HAP-1 (cell line): ENCODE measurements at regions of chr17 and their contacts with region 1.

Region 1: DNA sequence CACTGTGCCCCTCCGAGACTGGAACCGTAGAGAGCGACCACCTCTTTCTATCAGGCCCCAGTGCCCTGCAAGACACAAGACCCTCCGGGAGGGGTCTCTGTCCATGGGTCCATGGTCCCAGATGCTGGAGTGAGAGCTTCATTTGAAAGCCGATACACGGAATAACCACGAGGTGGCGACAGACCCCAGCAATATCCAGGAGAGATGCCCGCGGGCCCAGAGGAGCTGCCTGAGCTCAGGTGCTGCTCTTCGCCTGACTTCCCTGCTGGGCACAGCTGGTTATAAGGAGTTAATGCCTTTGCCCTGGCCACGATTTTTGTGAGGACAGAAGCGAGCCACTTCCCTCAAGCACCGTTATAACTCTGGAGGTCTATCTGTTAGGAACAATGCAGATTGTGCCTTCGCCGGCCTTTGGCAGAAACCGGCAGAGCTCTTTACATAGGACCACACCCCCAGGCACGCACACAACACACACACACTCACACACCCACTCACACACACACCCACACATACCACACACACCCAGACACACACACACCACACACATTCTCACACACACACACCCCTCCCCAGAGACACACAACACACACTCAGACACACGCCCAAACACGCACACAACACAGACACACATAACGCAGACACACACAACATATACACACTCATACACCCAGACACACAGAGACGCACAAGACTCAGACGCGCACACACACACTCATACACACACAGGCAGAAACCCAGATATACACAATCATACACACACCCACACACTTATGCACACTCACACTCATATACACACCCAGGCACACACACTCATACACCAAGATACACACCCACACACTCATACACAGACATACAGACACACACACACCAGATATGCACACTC is 436.4 kb downstream of the SOX9 start:
- DNase-seq: peak; percentile 36 to 82
- H3K4me3 ChIP-seq: no peak overlapping the region
- H3K4me1 ChIP-seq: no peaks in the 10 kb centered on the region
- H3K27me3 ChIP-seq: no peaks in the 10 kb centered on the region

Region 2: GRCh38 chr17:72631949-72632684 is 74.9 kb after region 1 on chr17:
- in situ Hi-C with region 1: no loop called
- DNase-seq: no peak
- H3K4me3 ChIP-seq: no peak overlapping the region
- H3K4me1 ChIP-seq: no peaks in the 10 kb centered on the region
- H3K27me3 ChIP-seq: no peaks in the 10 kb centered on the region

Region 3: GRCh38 chr17:72804949-72805707 is 247.9 kb after region 1 on chr17:
- in situ Hi-C with region 1: no loop called
- DNase-seq: no peak
- H3K4me3 ChIP-seq: no peak overlapping the region
- H3K4me1 ChIP-seq: no peaks in the 10 kb centered on the region
- H3K27me3 ChIP-seq: no peaks in the 10 kb centered on the region

Region 4: DNA sequence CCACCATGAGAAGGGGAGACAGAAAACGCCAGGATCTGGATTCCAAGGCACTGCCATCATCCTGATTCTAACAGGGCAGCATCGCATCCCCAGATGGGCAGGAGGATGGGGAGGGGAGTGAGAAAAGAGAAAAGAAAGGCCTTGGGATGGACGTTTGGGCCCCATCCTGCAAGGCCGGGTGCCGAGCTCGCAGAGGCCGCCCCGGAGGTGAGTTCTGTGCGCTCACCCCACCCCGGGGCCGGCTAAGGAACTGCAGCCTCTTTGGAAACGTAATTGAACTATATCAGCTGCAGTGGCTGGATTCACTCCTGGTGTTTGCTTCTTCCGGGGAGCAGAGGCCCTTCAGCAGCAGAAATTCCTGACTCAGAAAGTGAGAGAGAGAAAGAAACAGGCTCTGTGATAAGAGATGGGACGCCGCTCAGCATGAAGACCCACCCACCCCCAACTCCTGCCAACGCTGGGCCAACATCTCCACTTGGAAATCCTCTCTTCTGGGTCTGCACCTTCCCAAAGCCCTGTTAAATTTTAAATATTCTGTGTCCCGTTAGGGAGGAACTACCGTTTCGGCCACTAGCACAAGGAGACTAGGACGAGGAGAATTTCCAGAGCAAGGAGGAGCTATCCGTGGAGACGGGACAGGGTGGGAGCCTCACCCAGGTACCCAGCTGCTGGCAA is 599.1 kb after region 1 on chr17:
- in situ Hi-C with region 1: loop called (anchors 25 kb)
- DNase-seq: peak; percentile 43 to 80
- H3K4me3 ChIP-seq: no peak overlapping the region
- H3K4me1 ChIP-seq: peaks cover 2% of the 10 kb centered on the region; the same call in 1 of the 2 replicates
- H3K27me3 ChIP-seq: peaks cover 8% of the 10 kb centered on the region; the same call in 1 of the 2 replicates

Region 5: DNA sequence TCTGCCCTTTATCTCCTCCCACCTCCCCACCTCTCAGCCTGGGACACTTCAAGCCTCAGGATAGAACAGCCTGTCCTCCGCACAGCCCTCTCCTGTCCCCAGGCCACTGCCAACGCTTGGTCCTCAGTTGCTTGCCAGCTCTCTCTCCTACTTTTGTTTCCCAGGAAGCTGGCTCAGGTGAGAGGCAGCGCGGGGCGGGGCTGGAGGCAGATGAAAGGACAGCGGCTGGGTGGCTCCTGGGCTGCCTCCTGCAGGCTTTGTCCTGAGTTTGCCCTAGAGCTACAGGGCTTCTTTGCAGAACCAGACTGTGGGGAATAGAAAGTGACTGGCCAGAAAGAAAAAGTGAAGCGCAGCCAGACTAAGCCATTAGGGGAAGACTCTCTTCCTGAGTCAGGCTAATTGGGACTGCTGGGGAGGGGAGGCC is 802.8 kb after region 1 on chr17:
- in situ Hi-C with region 1: loop called (anchors 25 kb)
- DNase-seq: peak in 1 of 2 experiments; percentile 65
- H3K4me3 ChIP-seq: no peak overlapping the region
- H3K4me1 ChIP-seq: peaks cover 13% of the 10 kb centered on the region
- H3K27me3 ChIP-seq: no peaks in the 10 kb centered on the region